ENCODE measurements at regions of chr6 and their contacts with region 1.

Region 1: GRCh38 chr6:147506704-147507114 is 1.8 kb upstream of the SAMD5 start:
- DNase-seq: peak; percentile 79
- ATAC-seq: peak; percentile 64 to 67

Region 2: GRCh38 chr6:147407571-147407970 is 99.1 kb before region 1 on chr6:
- intact Hi-C with region 1: no loop called
- DNase-seq: no peak
- ATAC-seq: no peak

Region 3: DNA sequence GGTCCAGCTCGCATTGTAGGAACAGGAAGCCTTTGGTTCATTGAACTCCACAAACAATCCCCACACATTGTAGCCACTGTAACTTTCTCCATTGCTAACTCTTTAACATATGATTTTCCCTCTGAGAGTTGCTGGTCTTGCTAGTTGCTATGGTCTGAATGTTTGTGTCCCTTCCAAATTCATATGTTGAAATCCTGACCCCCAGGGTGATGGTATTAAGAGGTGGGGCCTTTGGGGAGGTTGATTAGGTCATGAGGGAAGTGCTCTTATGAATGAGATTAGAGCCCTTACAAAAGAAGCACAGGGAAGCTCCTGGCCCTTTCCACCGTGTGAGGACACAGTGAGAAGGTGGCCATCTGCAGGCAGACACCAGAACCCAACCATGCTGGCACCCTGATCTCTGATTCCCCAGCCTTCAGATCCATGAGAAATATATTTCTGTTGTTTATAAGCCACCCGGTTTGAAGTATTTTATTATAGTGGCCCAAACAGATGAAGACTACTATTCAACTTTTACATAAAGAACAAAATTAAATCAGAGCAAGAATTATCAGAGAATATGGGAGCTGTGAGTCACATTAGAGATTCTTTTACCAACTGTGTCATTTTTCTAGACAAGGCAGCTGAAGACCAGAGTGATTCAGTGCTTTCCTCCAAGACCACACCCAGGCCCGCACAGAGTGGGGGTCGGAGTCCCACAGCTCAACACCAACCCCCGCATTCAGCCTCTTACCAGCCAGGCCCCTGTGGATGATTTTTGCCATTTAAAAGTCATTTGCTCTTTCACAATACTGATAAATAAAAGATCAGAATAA is 144.7 kb after region 1 on chr6:
- intact Hi-C with region 1: loop called (anchors 1 to 5 kb)
- DNase-seq: peak; percentile 37
- ATAC-seq: peak; percentile 88 to 89

Region 4: DNA sequence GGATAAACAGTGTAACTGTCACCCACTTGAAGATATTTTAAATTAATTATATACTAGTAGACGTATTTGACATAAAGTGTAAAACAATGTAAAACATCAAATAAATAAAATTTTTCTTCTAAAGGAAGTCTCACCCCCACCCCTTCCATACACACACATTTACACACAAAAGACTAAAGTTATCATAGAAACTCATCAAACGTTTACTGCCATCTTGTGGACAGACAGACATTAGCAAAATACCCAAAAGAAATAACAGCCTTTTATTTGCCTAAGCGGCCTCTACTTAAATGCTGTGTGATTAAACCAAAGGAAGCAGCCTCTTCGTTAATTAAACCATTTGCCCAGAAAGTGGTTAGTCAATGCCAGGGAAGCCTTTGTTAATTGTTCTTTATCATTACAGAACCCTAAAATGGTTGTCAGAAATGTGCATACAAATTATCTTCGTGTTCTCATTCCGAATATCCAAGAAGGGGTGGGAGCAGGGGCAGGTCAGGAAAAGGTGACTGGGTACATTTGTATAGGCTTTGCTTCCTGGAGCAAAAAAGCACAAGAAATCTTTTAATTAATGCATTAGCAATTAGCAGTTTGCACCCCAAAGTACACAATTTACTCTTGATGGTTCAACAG is 659.7 kb after region 1 on chr6:
- intact Hi-C with region 1: loop called (anchors 1 to 5 kb)
- DNase-seq: no peak
- ATAC-seq: no peak

Measured in left cardiac atrium (tissue), 4 donors.